ENCODE measurements at regions of chr3 and their contacts with region 1.

Region 1: GRCh38 chr3:46078712-46079400 is 51.6 kb upstream of the XCR1 start:
- DNase-seq: peak; percentile 94
- H3K4me3 Mint-ChIP-seq: no peak overlapping the region
- H3K27ac Mint-ChIP-seq: no peak overlapping the region
- H3K4me1 Mint-ChIP-seq: peaks cover 23% of the 10 kb centered on the region
- H3K27me3 Mint-ChIP-seq: peaks cover 51% of the 10 kb centered on the region

Region 2: GRCh38 chr3:45929042-45929679 is 149.7 kb before region 1 on chr3:
- CTCF ChIA-PET with region 1: interaction called, 19 read pairs
- POLR2A ChIA-PET with region 1: no interaction called
- DNase-seq: peak; percentile 68
- H3K4me3 Mint-ChIP-seq: no peak overlapping the region
- H3K27ac Mint-ChIP-seq: no peak overlapping the region
- H3K4me1 Mint-ChIP-seq: no peaks in the 10 kb centered on the region
- H3K27me3 Mint-ChIP-seq: no peaks in the 10 kb centered on the region

Region 3: DNA sequence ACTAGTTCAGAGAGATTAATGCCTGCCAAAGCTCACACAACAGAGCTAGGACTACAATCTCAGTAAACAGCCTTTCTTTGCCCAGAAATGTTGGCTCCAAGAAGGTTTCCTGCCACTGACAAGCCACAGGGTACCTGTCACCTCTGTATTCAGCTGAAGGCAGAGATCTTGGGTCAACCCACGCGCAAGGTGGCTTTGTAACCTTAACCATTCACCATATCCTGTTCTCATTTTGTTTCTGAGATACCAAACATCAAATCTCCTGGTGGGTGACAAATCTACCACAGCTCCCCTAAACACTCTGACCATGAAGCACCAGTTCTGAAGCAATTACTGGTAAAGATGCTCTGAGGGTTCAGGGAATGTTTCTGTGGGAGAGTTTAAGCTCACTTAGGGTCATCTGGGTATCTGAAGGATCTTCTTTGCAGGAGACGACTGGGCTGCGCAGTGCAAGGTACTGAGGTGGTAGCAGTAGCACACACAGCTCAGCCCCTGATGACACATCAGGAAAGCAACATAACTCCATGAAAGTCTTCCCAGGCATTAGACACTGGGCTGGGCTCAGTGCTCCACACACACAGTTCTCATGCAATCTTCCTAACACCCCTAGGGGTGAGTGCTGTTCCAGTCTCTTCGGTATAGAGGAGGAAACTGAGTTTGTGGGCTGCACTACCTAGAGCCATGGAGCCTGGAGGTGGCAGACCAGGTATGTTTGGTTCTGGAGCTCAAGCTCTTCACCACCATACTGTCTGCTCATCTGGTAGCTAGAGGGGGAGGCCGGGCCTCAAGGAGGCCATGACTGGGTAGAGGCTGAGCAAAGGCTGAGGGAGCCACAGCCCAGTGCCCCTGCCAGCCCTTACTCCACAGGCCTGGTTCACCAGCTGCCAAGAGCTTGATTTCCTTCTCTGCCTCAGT is 127.9 kb before region 1 on chr3:
- CTCF ChIA-PET with region 1: interaction called, 20 read pairs
- POLR2A ChIA-PET with region 1: no interaction called
- DNase-seq: peak; percentile 76
- H3K4me3 Mint-ChIP-seq: peak overlapping the region; percentile 1
- H3K27ac Mint-ChIP-seq: peak overlapping the region; percentile 87
- H3K4me1 Mint-ChIP-seq: peaks cover 61% of the 10 kb centered on the region
- H3K27me3 Mint-ChIP-seq: no peaks in the 10 kb centered on the region

Region 4: DNA sequence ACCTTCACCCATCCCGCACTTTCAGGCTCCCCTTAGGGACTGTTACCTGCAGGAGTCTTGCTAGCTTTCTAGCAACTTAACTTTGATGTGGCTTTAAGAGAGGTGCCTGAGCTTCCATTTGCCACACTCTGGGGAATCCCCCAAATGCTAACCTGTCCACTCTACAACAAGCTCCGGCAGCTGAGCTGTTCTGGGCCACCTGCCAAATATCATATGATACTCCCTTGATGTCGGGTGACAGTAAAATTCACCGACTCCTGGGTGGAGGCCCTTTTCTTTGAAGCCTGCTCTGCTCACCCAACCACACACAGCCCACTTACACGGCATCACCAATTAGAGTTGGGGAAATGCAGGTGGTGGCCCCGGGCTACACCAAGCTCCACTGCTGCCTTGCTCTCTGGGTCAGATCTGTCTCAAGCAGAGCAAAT is 13.5 kb before region 1 on chr3:
- CTCF ChIA-PET with region 1: interaction called, 52 read pairs
- POLR2A ChIA-PET with region 1: no interaction called
- DNase-seq: peak; percentile 82
- H3K4me3 Mint-ChIP-seq: peak overlapping the region; percentile 37
- H3K27ac Mint-ChIP-seq: peak overlapping the region; percentile 72
- H3K4me1 Mint-ChIP-seq: peaks cover 59% of the 10 kb centered on the region
- H3K27me3 Mint-ChIP-seq: peaks cover 66% of the 10 kb centered on the region

Region 5: GRCh38 chr3:46098319-46098761 is 19.5 kb after region 1 on chr3:
- CTCF ChIA-PET with region 1: interaction called, 17 read pairs
- POLR2A ChIA-PET with region 1: no interaction called
- DNase-seq: peak; percentile 81
- H3K4me3 Mint-ChIP-seq: peak overlapping the region; percentile 52
- H3K27ac Mint-ChIP-seq: peak overlapping the region; percentile 95
- H3K4me1 Mint-ChIP-seq: peaks cover 60% of the 10 kb centered on the region
- H3K27me3 Mint-ChIP-seq: peaks cover 36% of the 10 kb centered on the region

Measured in activated CD4-positive, alpha-beta T cell treated with anti-CD3 and anti-CD28 coated beads, Interleukin-2, amount 10 ng/mL, durations not matched to agents 7 days and 5 days (primary cell).